ENCODE measurements at regions of chr4 and their contacts with region 1.

Region 1: GRCh38 chr4:173370477-173371291 is at the start of gene SAP30:
- DNase-seq: peak; percentile 97
- H3K4me3 ChIP-seq: peak within 1 kb of the TSS; percentile 85 to 100 (median 99)
- H3K27ac ChIP-seq: peak within 1 kb of the TSS; percentile 97
- H3K4me1 ChIP-seq: peaks cover 16% of the 10 kb centered on the region
- H3K27me3 ChIP-seq: no peaks in the 10 kb centered on the region
- CTCF ChIP-seq: no peak
- total RNA-seq, gene SAP30: 7.0 to 13.3 TPM

Region 2: DNA sequence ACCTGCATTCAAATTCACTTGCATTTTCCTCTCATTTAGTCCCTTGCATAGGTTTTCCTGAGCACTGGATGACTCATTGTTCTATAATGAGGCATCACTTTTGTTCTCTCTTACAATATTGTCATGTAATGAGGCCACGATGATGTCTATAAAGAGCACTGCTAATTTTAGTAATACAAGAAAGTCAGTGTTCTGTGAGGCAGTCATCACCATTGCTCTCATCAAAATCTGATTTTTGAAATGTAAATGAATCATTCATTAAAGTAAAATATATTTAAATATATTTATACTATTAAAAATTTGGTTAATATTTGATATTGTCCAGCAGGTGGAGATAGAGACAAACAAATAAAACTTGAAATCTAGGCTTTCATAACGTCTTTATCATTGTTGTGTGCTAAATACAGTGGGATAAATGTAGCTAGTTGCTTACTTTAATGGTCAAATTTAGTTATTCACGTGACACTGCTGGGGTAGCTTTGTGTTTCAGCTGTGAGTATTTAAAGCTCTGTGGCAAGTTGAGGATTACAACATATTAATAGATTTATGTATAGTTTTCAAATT is 52.0 kb before region 1 on chr4:
- CTCF ChIA-PET with region 1: no interaction called
- dilution Hi-C with region 1: no loop called
- in situ Hi-C with region 1: no loop called
- intact Hi-C with region 1: loop called (anchors 1 kb)
- DNase-seq: peak; percentile 56
- H3K4me3 ChIP-seq: no peak overlapping the region
- H3K27ac ChIP-seq: no peak overlapping the region
- H3K4me1 ChIP-seq: peaks cover 18% of the 10 kb centered on the region
- H3K27me3 ChIP-seq: no peaks in the 10 kb centered on the region
- CTCF ChIP-seq: peak; percentile 2 to 27

Region 3: GRCh38 chr4:173334085-173334772 is 36.5 kb before region 1 on chr4 and contains the start of gene HMGB2:
- CTCF ChIA-PET with region 1: no interaction called
- dilution Hi-C with region 1: no loop called
- in situ Hi-C with region 1: loop called in 1 of 2 experiments (anchors 5 kb)
- intact Hi-C with region 1: loop called (anchors 1 kb)
- DNase-seq: peak; percentile 100
- H3K4me3 ChIP-seq: peak within 1 kb of the TSS; percentile 98 to 99 (median 98)
- H3K27ac ChIP-seq: peak within 1 kb of the TSS; percentile 98
- H3K4me1 ChIP-seq: peaks cover 9% of the 10 kb centered on the region
- H3K27me3 ChIP-seq: no peaks in the 10 kb centered on the region
- CTCF ChIP-seq: no peak
- total RNA-seq, gene HMGB2: 9.8 to 73.9 TPM

Region 4: DNA sequence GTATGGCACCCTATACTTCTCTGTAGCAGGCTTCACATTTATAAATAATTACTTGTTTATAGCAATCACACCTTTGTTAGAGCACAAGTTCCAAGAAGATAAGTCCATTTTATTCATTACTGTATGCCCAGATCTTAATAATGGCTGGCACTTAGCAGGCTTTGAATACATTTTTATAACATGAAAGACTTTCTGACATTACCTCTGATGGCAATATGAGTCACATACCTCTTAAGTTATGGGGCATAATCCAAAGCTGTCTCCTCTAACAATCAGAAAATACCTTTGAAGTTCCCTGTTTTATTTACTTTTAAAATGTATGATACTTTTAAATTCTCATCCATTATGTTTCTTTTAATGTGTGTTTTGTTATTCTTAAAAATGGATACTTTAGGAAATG is 16.1 kb after region 1 on chr4:
- CTCF ChIA-PET with region 1: interaction called, 11 read pairs
- dilution Hi-C with region 1: no loop called
- in situ Hi-C with region 1: no loop called
- intact Hi-C with region 1: no loop called
- DNase-seq: no peak
- H3K4me3 ChIP-seq: no peak overlapping the region
- H3K27ac ChIP-seq: no peak overlapping the region
- H3K4me1 ChIP-seq: no peaks in the 10 kb centered on the region
- H3K27me3 ChIP-seq: no peaks in the 10 kb centered on the region
- CTCF ChIP-seq: no peak

Region 5: DNA sequence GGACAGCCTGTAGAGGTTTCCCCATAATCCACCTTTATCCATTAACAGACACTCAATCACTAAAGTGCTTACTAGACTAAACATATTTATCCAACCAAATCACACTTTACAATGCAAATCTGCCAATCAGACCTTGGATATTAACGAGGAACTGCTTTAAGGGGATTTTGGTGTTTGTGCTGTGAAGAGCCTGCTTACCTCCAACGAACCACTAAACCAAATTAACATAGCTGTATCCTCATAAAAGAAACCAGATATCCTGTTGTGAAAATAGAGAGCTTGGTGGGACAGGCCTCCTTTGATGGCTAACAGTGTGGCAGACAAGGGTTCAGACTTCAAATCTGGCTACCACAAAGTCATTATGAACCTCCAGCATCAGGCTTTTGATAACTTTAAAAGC is 412.0 kb after region 1 on chr4:
- CTCF ChIA-PET with region 1: interaction called, 26 read pairs
- dilution Hi-C with region 1: no loop called
- in situ Hi-C with region 1: no loop called
- intact Hi-C with region 1: no loop called
- DNase-seq: no peak
- H3K4me3 ChIP-seq: no peak overlapping the region
- H3K27ac ChIP-seq: no peak overlapping the region
- H3K4me1 ChIP-seq: no peaks in the 10 kb centered on the region
- H3K27me3 ChIP-seq: no peaks in the 10 kb centered on the region
- CTCF ChIP-seq: no peak